AG04450 (cell line): ENCODE measurements at regions of chr1 and their contacts with region 1.

Region 1: GRCh38 chr1:1122078-1122811 is 6.4 kb upstream of the C1orf159 start:
- DNase-seq: peak; percentile 27
- H3K4me3 ChIP-seq: peak overlapping the region; percentile 29; the same call in 1 of the 2 replicates
- H3K27ac ChIP-seq: no peak overlapping the region
- H3K27me3 ChIP-seq: peaks cover 18% of the 10 kb centered on the region
- CTCF ChIP-seq: peak; percentile 87

Region 2: DNA sequence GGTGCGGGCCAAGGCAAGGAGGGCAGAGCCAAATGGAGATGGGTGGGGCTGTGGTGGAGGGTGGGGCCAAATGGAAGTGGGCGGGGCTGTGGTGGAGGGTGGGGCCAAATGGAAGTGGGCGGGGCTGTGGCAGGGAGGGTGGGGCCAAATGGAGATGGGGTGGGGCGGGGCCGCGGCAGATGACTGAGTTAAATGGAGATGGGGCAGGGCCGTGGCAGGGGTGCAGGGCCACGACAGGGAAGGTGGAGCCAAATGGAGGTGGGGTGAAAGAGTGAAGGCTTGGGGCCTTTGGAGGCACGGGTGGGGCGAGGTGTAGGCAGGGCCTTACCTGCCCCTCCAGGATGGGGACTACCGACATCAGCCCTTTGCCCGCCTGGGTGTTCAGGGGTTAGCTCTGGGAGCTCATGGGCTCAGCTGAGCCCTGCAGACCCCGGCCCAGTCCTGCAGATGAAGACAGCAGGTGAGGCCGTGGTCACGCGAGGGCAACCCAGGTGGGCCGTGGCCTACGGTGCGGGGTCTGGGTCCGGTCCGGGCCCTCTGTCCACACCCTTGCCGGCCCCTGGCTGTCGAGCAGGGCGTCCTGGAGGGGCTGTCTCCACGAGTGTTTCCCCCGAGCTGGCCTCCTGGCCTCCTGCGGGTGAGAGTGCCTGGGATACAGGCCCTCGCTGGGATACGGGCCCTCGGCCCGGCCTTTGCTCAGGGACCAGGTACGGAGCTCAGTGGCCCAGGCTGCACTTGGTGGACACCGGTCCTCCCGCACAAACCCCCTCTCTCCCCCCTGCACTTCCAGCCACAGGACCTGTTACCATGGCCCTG is 30.4 kb before region 1 on chr1:
- CTCF ChIA-PET with region 1: no interaction called
- POLR2A ChIA-PET with region 1: no interaction called
- DNase-seq: no peak
- H3K4me3 ChIP-seq: no peak overlapping the region
- H3K27ac ChIP-seq: no peak overlapping the region
- H3K27me3 ChIP-seq: no peaks in the 10 kb centered on the region
- CTCF ChIP-seq: no peak

Region 3: DNA sequence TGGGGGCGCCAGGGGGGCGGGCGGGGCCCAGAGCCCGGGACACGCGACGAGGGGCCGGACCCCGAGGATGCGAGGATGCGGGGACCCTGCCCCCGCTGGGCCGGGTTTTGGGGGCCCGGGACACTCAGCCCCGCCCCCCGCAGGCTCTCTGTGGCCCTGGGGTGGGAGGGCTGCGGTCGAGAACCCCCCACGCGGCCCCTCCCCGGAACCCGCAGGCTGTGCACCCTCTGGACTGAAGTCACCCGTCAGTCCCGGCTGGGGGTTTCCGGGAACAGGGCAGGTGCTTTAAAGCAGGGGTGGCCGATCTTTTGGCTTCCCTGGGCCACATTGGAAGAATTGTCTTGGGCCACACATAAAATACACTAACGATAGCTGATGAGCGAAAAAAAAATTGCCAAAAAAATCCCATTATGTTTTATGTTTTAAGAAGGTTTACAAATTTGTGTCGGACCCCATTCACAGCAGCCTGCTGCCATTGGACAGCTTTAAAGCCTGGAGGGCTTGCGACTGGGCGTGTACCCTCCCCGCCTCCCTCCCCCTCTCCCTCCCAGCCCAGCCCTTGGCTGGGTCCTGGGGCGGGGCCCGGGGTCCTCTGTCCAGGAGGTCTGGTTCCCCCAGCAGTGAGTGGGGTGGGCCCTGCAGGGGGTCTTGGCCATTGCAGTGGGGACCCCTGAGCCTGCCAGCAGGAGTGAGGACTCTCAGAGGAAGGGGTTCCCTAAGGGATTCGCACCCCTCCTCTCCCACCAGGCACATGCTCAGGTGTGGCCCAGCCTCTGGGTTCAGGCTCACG is 15.2 kb after region 1 on chr1:
- CTCF ChIA-PET with region 1: no interaction called
- POLR2A ChIA-PET with region 1: no interaction called
- DNase-seq: no peak
- H3K4me3 ChIP-seq: no peak overlapping the region
- H3K27ac ChIP-seq: no peak overlapping the region
- H3K27me3 ChIP-seq: peaks cover 29% of the 10 kb centered on the region
- CTCF ChIP-seq: no peak

Region 4: DNA sequence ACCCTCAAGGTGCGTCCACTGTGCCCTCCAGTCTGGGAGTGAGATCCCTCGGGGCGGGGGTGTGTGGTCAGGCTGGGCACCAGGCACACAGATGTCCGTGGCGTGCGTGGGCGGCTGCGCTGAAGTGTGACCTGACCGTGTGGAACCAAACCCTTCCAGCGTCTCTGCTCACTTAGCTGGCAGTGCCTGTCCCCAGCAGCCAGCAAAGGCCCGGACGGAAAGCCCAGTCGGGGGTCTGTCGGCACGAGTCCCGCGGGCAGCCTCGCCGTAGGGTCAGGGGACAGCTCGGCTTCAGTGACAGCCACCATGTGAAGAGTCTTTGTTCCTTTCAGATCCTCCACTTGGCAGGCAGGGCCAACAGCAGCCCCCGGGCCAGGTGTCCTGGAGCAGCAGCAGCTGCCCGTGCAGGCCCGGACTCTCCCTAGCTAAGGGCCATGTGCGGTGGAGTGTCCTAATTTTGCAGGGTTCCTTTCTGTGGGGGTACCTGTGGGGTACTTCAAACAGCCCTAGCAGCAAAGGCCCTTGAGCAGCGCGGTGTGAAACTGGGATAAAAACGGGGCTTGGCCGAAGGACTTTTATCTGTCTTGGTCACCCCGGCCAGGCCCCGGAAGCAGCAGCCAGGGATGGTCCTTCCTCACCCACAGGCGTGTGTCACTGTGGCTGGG is 63.0 kb after region 1 on chr1:
- CTCF ChIA-PET with region 1: no interaction called
- POLR2A ChIA-PET with region 1: no interaction called
- DNase-seq: no peak
- H3K4me3 ChIP-seq: no peak overlapping the region
- H3K27ac ChIP-seq: no peak overlapping the region
- H3K27me3 ChIP-seq: peaks cover 2% of the 10 kb centered on the region
- CTCF ChIP-seq: no peak

Region 5: DNA sequence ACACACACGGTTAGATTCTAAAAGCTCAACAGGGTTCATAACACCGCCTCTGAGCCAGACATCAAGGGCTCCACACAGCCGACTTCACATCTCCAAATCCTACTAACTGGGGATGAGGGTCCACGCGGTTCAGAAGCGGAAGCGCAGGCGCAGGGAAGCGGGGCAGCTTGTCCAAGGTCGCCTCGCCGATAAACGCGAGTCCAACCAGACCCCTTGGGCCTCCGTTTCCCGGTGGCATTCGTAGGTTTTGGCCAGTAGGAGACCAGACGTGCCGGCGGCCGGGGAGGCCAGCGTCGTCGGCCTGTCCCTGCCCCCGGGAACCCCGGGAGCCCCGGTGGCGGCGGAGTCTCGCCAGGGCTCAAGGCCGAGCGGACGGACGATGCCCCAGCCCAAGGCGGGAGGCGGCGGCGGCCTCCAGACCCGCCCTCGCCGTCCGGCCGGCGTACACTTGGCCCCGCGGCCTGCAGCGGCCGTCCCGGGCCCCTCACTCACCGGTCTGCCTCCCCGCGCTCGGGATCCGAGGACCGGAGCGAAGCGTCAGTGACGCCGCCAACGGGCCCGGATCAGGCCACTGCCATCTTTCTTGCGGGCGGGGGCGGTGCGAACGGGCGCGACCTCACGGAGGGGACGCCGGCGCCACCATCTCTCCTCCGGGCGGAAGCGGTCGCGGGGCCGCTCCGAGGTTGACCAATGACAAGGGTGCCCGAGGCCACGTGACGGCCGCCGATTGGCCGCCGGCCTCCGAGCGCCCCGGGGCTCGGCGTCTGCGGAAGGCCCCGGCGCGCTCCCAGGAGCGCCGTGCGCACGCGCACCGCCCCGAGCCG is 109.4 kb after region 1 on chr1 and contains the start of gene SDF4:
- CTCF ChIA-PET with region 1: interaction called, 15 read pairs
- POLR2A ChIA-PET with region 1: no interaction called
- DNase-seq: peak; percentile 90
- H3K4me3 ChIP-seq: peak within 1 kb of the TSS; percentile 91
- H3K27ac ChIP-seq: peak within 1 kb of the TSS; percentile 78
- H3K27me3 ChIP-seq: no peaks in the 10 kb centered on the region
- CTCF ChIP-seq: no peak
- polyA plus RNA-seq, gene SDF4: 109 and 115 TPM in 2 replicates

Region 6: DNA sequence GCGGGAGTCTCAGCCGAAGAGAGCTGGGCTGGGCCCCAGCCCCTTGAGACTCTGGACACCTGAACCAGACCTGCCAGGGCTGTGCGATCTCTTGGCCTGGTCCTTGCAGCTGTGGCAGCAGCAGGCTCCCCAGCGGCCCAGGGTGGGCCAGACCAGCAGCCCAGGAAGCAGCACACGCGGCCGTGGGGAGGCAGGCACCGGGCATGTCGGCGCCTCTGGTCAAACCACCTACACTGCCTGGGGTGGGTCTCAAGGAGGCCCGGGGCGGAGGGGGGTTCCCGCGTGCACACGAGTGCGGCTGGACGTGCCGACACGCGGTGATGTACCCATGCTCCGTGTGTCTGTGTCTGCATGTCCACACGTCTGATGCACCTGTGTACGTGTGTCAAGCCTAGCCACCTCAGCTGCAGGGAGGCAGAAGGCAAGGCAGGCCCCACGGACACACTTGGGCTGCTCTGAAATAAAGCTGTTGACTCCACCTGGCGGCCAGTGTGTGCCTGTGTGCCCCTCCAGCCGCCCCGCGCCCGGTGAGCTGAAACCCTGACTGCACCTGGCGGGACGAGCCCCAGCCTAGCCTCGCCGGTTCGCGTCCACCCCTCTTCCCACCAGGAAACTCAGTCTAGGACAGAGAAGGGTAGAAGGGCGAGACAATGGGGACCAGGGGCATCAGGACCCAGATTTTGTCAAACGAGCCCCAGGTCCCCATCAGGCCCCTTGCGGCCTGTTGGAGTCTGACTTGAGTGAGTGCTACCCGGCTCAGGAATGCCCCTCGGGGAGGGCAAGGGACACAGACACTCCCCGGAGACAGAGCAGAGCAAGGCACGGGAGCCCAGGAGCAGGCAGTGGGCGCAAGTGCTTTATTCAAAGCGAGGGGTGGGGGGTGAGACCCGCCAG is 169.6 kb after region 1 on chr1:
- CTCF ChIA-PET with region 1: interaction called, 30 read pairs
- POLR2A ChIA-PET with region 1: interaction called, 3 read pairs
- DNase-seq: no peak
- H3K4me3 ChIP-seq: no peak overlapping the region
- H3K27ac ChIP-seq: no peak overlapping the region
- H3K27me3 ChIP-seq: no peaks in the 10 kb centered on the region
- CTCF ChIP-seq: peak; percentile 42